Adrenal gland (tissue), 19 donors: ENCODE measurements at regions of chr7 and their contacts with region 1.

Region 1: DNA sequence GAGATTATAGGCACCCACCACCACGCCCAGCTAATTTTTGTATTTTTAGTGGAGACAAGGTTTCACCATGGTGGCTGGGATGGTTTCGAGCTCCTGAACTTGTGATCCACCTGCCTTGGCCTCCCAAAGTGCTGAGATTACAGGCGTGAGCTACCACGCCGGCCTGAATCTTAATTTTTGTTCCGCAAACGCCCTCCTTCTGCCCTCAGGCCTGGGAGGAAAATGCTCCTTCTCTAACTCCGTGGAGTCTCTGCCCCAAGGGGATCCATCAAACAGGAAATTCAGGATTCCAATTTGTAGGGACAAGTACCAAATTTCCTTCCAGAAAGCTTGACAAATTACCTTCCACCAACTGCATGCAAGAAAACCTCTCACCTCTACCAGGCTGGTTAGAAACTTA is 43.2 kb downstream of the RBAK start:
- DNase-seq: no peak
- H3K4me3 ChIP-seq: no peak overlapping the region
- H3K27ac ChIP-seq: no peak overlapping the region
- H3K4me1 ChIP-seq: peaks cover 0 to 6% of the 10 kb centered on the region in 2 donors
- H3K27me3 ChIP-seq: no peaks in the 10 kb centered on the region
- CTCF ChIP-seq: no peak
- POLR2A ChIP-seq: no peak

Region 2: DNA sequence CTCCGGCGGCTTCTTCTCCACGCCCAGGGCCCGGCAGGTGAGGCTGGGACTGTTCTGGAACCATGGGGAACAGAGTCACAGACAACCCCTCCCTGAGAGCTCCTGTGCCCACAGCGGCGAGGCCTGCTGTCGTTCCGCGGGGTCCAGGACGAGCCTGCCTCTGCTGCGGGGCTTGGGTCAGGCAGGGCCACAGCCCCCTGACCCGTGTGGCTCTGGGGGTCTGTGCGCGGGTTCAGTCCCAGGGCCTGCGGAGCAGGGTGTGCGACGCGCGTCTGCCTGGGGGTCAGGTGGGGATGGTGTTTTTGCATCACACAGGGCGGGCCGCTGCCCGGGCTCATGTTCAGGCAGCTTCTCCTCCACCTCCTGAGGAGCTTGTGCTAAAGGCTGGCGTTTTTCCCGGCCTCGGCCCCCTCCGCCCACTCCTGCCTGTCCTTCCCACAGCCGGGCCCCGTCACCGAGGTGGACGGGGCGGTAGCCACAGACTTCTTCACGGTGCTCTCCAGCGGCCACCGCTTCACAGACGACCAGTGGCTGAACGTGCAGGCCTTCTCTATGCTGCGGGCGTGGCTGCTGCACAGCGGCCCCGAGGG is 305.0 kb before region 1 on chr7:
- intact Hi-C with region 1: no loop called
- DNase-seq: no peak
- H3K4me3 ChIP-seq: no peak overlapping the region
- H3K27ac ChIP-seq: no peak overlapping the region
- H3K4me1 ChIP-seq: no peaks in the 10 kb centered on the region
- H3K27me3 ChIP-seq: no peaks in the 10 kb centered on the region
- CTCF ChIP-seq: no peak
- POLR2A ChIP-seq: no peak

Region 3: GRCh38 chr7:4973728-4974198 is 115.1 kb before region 1 on chr7:
- intact Hi-C with region 1: loop called (anchors 5 to 10 kb)
- DNase-seq: peak; percentile 89 to 94 (median 92)
- H3K4me3 ChIP-seq: peak overlapping the region in 3 of 4 donors; percentile 78 to 95 (median 85)
- H3K27ac ChIP-seq: peak overlapping the region; percentile 53 to 99 (median 89)
- H3K4me1 ChIP-seq: peaks cover 0 to 12% of the 10 kb centered on the region in 2 donors
- H3K27me3 ChIP-seq: no peaks in the 10 kb centered on the region
- CTCF ChIP-seq: peak; percentile 52 to 86 (median 78)
- POLR2A ChIP-seq: peak in 1 of 2 donors; percentile 56